Pancreas (tissue), 10 donors: ENCODE measurements at regions of chr16 and their contacts with region 1.

Region 1: DNA sequence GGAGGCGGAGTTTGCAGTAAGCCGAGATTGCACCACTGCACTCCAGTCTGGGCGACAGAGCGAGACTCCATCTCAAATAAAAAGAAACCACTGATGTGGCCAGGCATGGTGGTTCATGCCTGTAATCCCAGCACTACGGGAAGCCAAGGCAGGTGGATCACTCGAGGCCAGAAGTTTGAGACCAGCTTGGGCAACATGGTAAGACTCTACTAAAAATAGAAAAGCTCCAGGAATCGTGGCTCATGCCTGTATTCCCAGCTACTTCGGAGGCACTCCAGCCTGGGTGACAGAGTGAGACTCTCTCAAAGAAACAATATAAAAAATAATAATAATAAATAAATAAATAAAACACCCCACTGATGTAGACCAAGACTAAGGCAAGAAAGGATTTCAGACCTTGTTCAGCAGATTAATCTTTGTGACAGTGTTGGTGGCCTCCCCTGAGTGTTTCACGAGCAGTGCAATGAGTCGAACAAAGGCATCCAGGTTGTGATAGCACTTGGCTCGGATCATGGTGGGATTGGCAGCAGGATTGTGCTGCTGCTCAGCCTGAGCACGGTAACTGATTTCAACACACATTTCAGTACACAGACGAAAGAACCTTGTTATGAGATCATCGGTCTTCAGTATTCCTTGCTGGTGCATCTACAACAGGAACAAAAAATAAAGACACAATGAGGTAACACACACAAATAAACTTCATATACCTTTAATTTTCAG is 18.6 kb downstream of the SETD6 start:
- DNase-seq: no peak
- ATAC-seq: no peak
- H3K4me3 ChIP-seq: no peak overlapping the region
- H3K27ac ChIP-seq: no peak overlapping the region
- H3K4me1 ChIP-seq: peaks cover 0 to 12% (median 9%) of the 10 kb centered on the region in 3 donors
- H3K27me3 ChIP-seq: no peaks in the 10 kb centered on the region
- CTCF ChIP-seq: no peak

Region 2: DNA sequence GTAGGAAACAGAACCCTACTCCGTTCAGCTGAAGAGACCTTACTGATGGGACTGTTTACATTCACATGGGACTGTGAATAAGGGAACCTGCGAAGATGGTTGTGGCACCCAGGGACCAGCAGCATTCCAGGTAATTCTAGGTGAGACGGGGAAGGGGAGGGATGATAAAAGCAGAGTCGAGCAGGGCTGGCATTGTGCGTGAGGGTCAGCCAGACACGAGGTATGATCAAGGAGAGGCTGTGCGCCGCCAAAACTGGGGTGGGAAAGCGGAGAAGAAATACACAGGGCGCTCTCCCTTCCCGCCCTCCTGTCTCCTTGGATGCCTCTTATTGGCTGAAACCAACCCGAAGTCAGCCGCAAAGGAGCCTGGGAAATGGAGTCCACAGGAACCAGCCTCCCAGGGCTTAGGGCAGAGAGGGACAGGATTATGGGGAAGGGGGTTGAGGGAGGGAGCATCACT is 297.6 kb before region 1 on chr16:
- intact Hi-C with region 1: no loop called
- DNase-seq: peak; percentile 59 to 80 (median 71)
- ATAC-seq: peak; percentile 97 to 100 (median 99)
- H3K4me3 ChIP-seq: peak overlapping the region in 3 of 4 donors; percentile 37 to 51 (median 46)
- H3K27ac ChIP-seq: no peak overlapping the region
- H3K4me1 ChIP-seq: no peaks in the 10 kb centered on the region
- H3K27me3 ChIP-seq: peaks cover 0 to 7% (median 0%) of the 10 kb centered on the region in 4 donors
- CTCF ChIP-seq: no peak

Region 3: DNA sequence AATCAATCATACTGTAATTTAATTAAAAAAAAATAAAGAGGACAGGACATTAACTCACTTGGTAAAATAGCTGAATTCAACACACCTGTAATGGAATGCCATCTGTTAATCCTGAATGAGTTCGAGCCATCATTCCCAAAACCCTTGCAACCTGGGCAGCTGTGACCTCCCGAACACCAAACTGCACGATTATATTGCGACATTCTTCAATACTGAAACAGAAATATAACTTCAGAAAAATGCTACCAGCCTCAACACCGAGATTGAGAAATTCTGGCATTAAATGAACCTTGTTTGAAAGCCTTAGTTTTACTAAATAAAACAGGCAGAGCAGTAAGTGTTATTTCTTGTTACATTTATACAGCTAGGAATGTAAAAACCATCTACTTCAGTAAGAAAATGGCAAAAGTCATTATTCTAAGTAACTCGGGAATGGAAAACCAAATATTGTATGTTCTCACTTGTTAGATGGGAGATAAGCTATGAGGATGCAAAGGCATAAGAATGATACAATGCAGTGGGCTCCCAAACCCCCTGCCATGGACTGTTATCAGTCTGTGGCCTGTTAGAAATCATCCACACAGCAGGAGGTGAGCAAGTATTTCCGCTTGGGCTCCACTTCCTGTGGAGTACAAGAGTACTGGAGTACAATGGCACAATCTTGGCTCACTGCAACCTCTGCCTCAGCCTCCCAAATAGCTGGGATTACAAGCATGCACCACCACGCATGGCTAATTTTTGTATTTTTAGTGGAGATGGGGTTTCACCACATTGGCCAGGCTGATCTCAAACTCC is 49.3 kb after region 1 on chr16:
- intact Hi-C with region 1: loop called in 1 of 3 experiments (anchors 10 kb)
- DNase-seq: no peak
- ATAC-seq: no peak
- H3K4me3 ChIP-seq: no peak overlapping the region
- H3K27ac ChIP-seq: no peak overlapping the region
- H3K4me1 ChIP-seq: no peaks in the 10 kb centered on the region
- H3K27me3 ChIP-seq: no peaks in the 10 kb centered on the region
- CTCF ChIP-seq: no peak